ENCODE measurements at regions of chr14 and their contacts with region 1.

Region 1: GRCh38 chr14:21557084-21557901 is 22.6 kb downstream of the OR10G3 start:
- DNase-seq: peak; percentile 54

Region 2: GRCh38 chr14:21498553-21499526 is 58.5 kb before region 1 on chr14:
- CTCF ChIA-PET with region 1: interaction called, 35 read pairs
- POLR2A ChIA-PET with region 1: interaction called, 3 read pairs
- DNase-seq: peak; percentile 36

Measured in HEK293T (cell line).